MCF 10A (cell line): ENCODE measurements at regions of chr6 and their contacts with region 1.

Region 1: GRCh38 chr6:125790358-125791150 is at the start of gene NCOA7:
- DNase-seq: peak; percentile 73
- H3K4me3 Mint-ChIP-seq: peak within 1 kb of the TSS; percentile 93
- H3K27ac Mint-ChIP-seq: peak within 1 kb of the TSS; percentile 93
- H3K4me1 Mint-ChIP-seq: peaks cover 40% of the 10 kb centered on the region
- H3K27me3 Mint-ChIP-seq: no peaks in the 10 kb centered on the region
- CTCF ChIP-seq: no peak
- total RNA-seq, gene NCOA7: 50.9 and 52.3 TPM in 2 replicates

Region 2: GRCh38 chr6:125779924-125780539 is 10.5 kb before region 1 on chr6:
- CTCF ChIA-PET with region 1: interaction called, 44 read pairs
- POLR2A ChIA-PET with region 1: interaction called, 207 read pairs
- intact Hi-C with region 1: no loop called
- DNase-seq: peak; percentile 94
- H3K4me3 Mint-ChIP-seq: no peak overlapping the region
- H3K27ac Mint-ChIP-seq: no peak overlapping the region
- H3K4me1 Mint-ChIP-seq: peaks cover 14% of the 10 kb centered on the region
- H3K27me3 Mint-ChIP-seq: peaks cover 14% of the 10 kb centered on the region
- CTCF ChIP-seq: no peak

Region 3: GRCh38 chr6:125844989-125845388 is 54.4 kb after region 1 on chr6:
- CTCF ChIA-PET with region 1: interaction called, 12 read pairs
- POLR2A ChIA-PET with region 1: interaction called, 21 read pairs
- intact Hi-C with region 1: no loop called
- DNase-seq: no peak
- H3K4me3 Mint-ChIP-seq: no peak overlapping the region
- H3K27ac Mint-ChIP-seq: no peak overlapping the region
- H3K4me1 Mint-ChIP-seq: no peaks in the 10 kb centered on the region
- H3K27me3 Mint-ChIP-seq: no peaks in the 10 kb centered on the region
- CTCF ChIP-seq: no peak

Region 4: DNA sequence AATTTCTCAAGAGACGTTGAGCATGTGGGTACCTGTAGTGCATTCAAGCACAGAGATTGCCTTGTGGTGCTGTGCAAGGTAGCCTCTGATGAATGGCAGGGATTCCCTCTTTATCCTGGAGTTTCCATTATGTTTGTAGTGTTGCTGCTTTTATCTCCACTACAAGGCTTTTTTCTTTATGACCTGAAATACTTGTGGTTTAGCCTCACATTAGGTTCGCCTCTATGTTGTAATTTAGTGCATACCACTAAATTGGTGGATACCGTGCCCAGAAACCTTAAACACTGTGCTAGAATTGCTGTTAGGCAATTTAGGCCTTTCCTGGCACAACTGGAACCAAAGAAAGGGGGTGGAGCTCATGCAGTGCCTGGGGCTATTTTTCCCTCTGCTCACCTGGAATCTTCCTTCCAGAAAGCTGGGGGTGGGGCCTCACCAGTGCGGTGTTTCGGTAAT is 77.0 kb after region 1 on chr6:
- CTCF ChIA-PET with region 1: interaction called, 9 read pairs
- POLR2A ChIA-PET with region 1: interaction called, 88 read pairs
- intact Hi-C with region 1: no loop called
- DNase-seq: peak; percentile 99
- H3K4me3 Mint-ChIP-seq: peak overlapping the region; percentile 39
- H3K27ac Mint-ChIP-seq: peak overlapping the region; percentile 87
- H3K4me1 Mint-ChIP-seq: peaks cover 57% of the 10 kb centered on the region
- H3K27me3 Mint-ChIP-seq: no peaks in the 10 kb centered on the region
- CTCF ChIP-seq: no peak

Region 5: GRCh38 chr6:125918681-125919566 is 128.4 kb after region 1 on chr6:
- CTCF ChIA-PET with region 1: interaction called, 26 read pairs
- POLR2A ChIA-PET with region 1: interaction called, 51 read pairs
- intact Hi-C with region 1: loop called (anchors 2 kb)
- DNase-seq: peak; percentile 97
- H3K4me3 Mint-ChIP-seq: peak overlapping the region; percentile 90
- H3K27ac Mint-ChIP-seq: peak overlapping the region; percentile 99
- H3K4me1 Mint-ChIP-seq: peaks cover 47% of the 10 kb centered on the region
- H3K27me3 Mint-ChIP-seq: no peaks in the 10 kb centered on the region
- CTCF ChIP-seq: no peak

Region 6: DNA sequence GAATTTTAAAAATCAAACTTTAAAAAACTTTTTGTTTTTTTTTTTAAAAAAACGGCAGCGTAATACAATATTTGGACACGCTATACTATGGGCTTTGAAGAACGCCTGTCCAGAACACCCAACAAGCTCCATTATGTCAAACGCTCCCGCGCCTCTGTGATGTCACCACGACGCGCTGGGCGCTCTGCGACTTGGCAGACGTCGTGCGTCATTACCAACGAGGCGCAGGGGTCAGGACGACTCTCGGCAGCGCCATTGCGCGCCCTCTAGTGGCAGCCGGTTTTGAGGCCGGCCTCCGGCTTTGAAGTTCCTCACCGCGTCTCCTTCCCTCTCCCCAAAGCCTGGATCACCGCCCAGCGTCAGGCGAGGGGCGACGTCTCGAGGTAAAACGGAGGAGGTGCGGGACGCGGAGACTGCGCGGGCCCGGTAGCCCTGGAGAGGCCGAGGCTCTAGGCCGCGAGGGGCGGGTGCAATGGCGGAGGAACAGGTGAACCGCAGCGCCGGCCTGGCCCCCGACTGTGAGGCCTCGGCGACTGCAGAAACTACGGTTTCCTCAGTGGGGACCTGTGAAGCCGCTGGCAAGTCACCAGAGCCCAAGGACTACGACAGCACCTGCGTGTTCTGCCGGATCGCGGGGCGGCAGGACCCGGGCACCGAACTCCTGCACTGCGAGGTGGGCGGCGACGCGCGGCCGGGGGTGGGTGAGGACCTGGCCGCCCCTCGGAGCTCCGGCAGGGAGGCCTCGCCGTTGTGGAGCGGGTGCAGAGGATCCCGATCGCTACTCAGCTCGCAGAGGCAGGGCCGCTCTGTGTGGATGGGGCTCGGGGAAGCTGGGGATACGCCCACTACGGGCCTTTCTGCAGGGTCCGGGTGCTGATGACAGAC is 166.2 kb after region 1 on chr6 and contains the start of gene HINT3:
- CTCF ChIA-PET with region 1: interaction called, 270 read pairs
- POLR2A ChIA-PET with region 1: interaction called, 106 read pairs
- intact Hi-C with region 1: loop called (anchors 1 kb)
- DNase-seq: peak; percentile 96
- H3K4me3 Mint-ChIP-seq: no peak within 1 kb of the TSS
- H3K27ac Mint-ChIP-seq: no peak within 1 kb of the TSS
- H3K4me1 Mint-ChIP-seq: no peaks in the 10 kb centered on the region
- H3K27me3 Mint-ChIP-seq: no peaks in the 10 kb centered on the region
- CTCF ChIP-seq: peak; percentile 97
- total RNA-seq, gene HINT3: 17.9 and 20.2 TPM in 2 replicates

Region 7: DNA sequence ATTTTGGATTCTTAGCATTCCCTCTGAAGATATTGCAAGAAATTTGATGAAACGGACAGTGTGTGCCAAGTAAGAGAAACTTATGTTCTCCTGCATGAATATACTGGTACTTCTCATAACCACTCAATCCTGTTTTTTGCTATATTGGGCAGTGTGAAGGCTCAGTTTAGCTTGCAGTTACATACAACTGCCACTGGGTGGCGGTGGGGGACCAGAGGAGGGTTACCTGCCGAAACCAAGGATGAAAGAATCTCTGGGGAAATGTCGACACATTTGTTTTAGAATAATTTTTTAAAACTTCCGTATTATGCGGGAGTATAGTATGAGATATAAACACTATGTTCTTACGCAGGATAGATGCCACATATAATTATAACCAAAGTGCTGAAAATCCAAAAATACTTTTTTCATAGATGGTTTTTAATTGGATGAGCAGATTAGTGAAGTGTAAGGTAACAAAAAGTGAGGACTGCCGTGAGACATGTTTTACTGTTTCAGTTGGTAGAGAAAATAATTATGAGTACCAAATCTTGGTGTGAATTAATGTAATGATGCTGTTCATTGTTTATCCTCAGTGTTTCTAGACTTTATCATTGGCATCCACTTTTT is 205.5 kb after region 1 on chr6:
- CTCF ChIA-PET with region 1: interaction called, 10 read pairs
- POLR2A ChIA-PET with region 1: interaction called, 3 read pairs
- intact Hi-C with region 1: no loop called
- DNase-seq: peak; percentile 85
- H3K4me3 Mint-ChIP-seq: peak overlapping the region; percentile 47
- H3K27ac Mint-ChIP-seq: no peak overlapping the region
- H3K4me1 Mint-ChIP-seq: peaks cover 20% of the 10 kb centered on the region
- H3K27me3 Mint-ChIP-seq: no peaks in the 10 kb centered on the region
- CTCF ChIP-seq: peak; percentile 82